Endothelial cell of umbilical vein (primary cell): ENCODE measurements at regions of chr2 and their contacts with region 1.

Region 1: GRCh38 chr2:41020358-41020757 is 568.5 kb upstream of the SLC8A1 start:
- DNase-seq: peak; percentile 25
- H3K4me3 ChIP-seq: no peak overlapping the region
- H3K27ac ChIP-seq: no peak overlapping the region
- H3K4me1 ChIP-seq: no peaks in the 10 kb centered on the region
- H3K27me3 ChIP-seq: no peaks in the 10 kb centered on the region
- CTCF ChIP-seq: no peak
- POLR2A ChIP-seq: no peak

Region 2: DNA sequence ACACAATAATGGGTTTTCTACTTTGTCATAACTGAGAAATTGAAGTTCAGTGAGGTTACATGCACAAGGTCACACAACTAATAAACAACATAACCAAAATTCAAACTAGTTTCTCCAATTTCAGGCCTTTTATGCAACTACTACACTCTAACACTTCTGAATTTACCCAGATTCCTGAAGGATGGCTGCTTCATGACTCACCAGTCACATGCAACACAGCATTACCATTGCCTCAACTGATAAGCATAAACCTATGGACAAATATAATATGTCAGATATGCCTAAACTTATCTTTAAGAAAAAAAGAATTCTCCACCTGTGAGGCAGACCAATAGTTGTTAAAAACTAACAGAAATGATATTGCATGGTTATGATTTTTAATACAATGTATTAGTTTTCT is 18.1 kb after region 1 on chr2:
- CTCF ChIA-PET with region 1: no interaction called
- POLR2A ChIA-PET with region 1: no interaction called
- dilution Hi-C with region 1: no loop called
- intact Hi-C with region 1: loop called (anchors 2 kb)
- DNase-seq: peak; percentile 39
- H3K4me3 ChIP-seq: no peak overlapping the region
- H3K27ac ChIP-seq: no peak overlapping the region
- H3K4me1 ChIP-seq: no peaks in the 10 kb centered on the region
- H3K27me3 ChIP-seq: no peaks in the 10 kb centered on the region
- CTCF ChIP-seq: no peak
- POLR2A ChIP-seq: no peak